Adrenal gland (tissue), 19 donors: ENCODE measurements at regions of chr1 and their contacts with region 1.

Region 1: DNA sequence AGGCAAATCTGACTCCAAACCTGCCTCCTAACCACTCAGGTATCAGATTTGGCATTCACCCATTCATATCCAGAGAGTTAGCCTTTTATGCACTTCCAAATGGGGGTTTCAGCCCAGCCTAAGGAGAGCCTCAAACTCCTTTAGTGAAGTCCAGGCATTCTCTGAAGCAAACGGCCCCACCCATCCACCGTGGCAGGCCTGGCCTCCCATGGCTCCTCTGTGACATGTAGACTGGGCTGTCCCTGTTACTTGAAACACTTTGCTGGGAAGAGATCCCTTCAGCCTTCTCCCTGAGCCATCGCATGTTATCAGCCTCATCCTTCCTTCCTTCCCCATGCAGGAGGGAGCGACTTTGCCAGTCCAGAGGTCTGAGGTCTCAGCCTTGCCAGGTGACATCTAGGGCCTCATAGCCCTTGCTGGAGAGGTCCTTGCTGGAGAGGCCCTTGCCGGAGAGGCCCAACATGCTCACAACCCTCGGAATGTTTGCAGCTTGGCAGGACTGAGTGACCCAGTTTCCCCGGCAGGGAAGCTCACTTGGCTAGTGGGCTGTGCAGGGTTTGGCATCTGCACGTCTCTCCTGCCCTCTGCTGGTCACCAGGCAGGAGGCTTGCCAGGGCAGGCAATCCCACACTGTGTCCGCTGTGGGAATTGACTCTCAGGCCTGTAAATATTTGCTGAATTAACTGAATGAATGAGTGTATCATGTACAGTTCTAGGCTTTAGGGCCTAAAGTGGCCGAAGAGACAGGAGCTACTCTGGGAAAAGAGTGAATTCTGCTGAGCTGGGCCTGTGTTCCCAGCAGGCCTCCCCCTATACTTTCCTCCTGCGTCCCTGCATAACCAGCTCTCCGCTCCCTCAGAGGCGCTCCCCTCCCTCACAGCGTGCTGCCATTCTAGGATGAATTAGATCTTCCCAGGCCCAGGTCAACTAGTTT is 26.7 kb upstream of the RBM15 start:
- DNase-seq: peak; percentile 84 to 93 (median 89)
- H3K4me3 ChIP-seq: no peak overlapping the region
- H3K27ac ChIP-seq: no peak overlapping the region
- H3K4me1 ChIP-seq: peaks cover 0 to 28% of the 10 kb centered on the region in 2 donors
- H3K27me3 ChIP-seq: no peaks in the 10 kb centered on the region
- CTCF ChIP-seq: peak; percentile 79 to 99 (median 98)
- POLR2A ChIP-seq: no peak

Region 2: DNA sequence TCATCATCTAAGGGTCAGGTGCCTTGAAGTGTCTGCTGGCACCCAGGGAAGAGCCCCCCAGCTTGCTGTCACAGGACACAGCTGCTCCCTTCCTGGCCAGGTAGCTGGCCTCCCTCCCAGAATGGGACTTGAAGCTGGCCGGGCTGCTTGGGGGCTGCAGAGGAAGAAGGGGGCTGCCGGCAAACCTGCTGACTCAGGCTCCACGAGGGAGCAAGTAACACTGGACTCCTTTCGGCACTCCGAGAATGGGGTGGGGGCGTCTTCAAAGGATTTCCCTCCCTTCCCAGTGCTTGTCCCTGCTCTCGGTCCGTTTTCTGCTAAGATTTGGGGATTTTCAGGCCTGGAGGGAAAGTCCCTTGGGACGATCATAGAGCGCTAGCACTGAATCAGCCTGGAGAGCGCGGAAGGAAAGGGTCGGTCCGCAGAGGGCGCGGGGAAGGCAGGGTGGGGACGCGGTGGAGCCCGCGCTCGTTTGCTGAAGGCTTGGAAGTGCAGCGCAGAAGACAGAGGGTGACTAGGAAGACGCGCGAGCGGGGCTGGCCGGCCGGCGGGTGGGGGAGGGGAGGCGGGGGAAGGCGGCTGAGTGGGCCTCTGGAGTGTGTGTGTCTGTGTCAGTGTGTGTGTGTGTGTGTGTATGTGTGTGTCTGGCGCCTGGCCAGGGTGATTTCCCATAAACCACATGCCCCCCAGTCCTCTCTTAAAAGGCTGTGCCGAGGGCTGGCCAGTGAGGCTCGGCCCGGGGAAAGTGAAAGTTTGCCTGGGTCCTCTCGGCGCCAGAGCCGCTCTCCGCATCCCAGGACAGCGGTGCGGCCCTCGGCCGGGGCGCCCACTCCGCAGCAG is 402.1 kb before region 1 on chr1 and contains the start of gene CSF1:
- intact Hi-C with region 1: no loop called
- DNase-seq: peak; percentile 86 to 95 (median 93)
- H3K4me3 ChIP-seq: peak within 1 kb of the TSS; percentile 31 to 84 (median 62)
- H3K27ac ChIP-seq: peak within 1 kb of the TSS in 4 of 5 donors; percentile 49 to 83 (median 80)
- H3K4me1 ChIP-seq: peaks cover 32 to 48% of the 10 kb centered on the region in 2 donors
- H3K27me3 ChIP-seq: no peaks in the 10 kb centered on the region
- CTCF ChIP-seq: no peak
- POLR2A ChIP-seq: peak; percentile 85 to 87
- total RNA-seq, gene CSF1: 3.8 to 295 (median 101) TPM

Region 3: DNA sequence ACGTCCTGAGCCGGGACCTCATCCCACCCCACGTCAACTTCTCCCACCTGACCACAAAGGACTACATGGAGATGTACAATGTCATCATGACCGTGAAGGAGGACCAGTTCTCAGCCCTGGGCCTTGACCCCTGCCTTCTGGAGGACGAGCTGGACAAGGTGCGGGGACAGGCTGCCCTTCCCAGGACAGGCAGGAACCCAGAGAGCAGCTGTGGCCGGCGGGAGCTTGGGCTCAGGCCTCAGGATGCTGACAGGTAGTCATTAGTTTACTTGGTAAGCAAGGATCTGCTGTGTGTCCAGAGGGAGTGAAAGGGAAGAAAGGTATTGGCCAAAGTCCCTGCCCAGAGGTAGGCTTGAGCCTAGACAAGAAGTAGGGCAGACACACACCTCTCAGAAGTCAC is 119.9 kb before region 1 on chr1:
- intact Hi-C with region 1: no loop called
- DNase-seq: no peak
- H3K4me3 ChIP-seq: no peak overlapping the region
- H3K27ac ChIP-seq: no peak overlapping the region
- H3K4me1 ChIP-seq: peaks cover 0 to 15% of the 10 kb centered on the region in 2 donors
- H3K27me3 ChIP-seq: no peaks in the 10 kb centered on the region
- CTCF ChIP-seq: no peak
- POLR2A ChIP-seq: no peak

Region 4: GRCh38 chr1:110203021-110203661 is 109.3 kb before region 1 on chr1:
- intact Hi-C with region 1: loop called (anchors 2 kb)
- DNase-seq: peak; percentile 56 to 84 (median 70)
- H3K4me3 ChIP-seq: no peak overlapping the region
- H3K27ac ChIP-seq: peak overlapping the region in 2 of 5 donors; percentile 24 to 38
- H3K4me1 ChIP-seq: peaks cover 0 to 5% of the 10 kb centered on the region in 2 donors
- H3K27me3 ChIP-seq: no peaks in the 10 kb centered on the region
- CTCF ChIP-seq: peak; percentile 86 to 92 (median 87)
- POLR2A ChIP-seq: no peak

Region 5: DNA sequence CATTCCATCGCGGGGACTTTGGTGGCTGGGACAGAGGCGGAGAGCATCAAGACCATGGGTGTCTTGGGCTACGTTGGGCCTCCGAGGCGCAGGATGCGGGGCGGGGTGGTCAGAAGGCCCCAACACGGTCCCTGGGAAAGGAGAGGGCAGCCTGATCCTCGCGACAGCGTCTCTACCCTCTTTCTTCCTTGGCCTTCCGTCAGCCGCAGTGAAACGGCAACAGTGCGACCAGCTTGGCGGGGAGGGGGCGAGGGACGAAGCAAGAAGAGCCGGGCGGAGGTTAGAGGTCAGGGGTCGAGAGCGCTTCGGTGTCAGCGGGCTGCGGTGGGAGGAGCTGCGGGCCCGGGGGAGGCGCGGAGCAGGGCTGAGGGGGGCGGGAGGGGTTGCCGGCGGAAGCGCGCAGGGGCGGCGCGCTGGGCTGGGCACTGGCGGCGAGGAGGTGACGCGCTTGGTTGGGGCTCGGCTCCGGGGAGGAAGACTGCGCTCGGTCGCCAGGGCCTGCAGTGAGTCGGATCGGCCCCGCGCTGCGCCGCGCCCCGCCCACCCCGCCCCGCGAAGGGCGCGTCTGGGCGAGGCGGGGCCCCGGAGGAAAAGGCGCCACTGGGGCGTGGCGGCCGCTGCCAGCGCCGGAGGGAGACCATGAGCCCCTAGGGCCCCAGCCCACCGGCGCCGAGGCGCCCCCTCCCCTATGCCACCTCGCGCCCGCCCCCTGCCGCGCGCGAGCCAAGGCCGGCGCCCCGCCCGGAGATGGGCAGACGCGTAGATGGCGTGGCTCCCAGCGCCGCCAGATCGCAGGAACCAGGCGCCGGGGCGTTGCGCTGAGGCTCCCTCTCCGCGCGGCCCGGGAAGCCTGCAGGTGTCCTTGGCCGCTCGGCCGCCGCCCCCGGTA is 102.5 kb before region 1 on chr1 and contains the start of gene KCNC4:
- intact Hi-C with region 1: loop called in 1 of 2 experiments (anchors 2 kb)
- DNase-seq: peak; percentile 90 to 95 (median 91)
- H3K4me3 ChIP-seq: peak within 1 kb of the TSS in 3 of 4 donors; percentile 44 to 89 (median 51)
- H3K27ac ChIP-seq: peak within 1 kb of the TSS; percentile 58 to 94 (median 79)
- H3K4me1 ChIP-seq: peaks cover 13 to 40% of the 10 kb centered on the region in 2 donors
- H3K27me3 ChIP-seq: no peaks in the 10 kb centered on the region
- CTCF ChIP-seq: no peak
- POLR2A ChIP-seq: peak in 1 of 2 donors; percentile 47
- total RNA-seq, gene KCNC4: 1.1 to 14.4 (median 9.7) TPM

Region 6: DNA sequence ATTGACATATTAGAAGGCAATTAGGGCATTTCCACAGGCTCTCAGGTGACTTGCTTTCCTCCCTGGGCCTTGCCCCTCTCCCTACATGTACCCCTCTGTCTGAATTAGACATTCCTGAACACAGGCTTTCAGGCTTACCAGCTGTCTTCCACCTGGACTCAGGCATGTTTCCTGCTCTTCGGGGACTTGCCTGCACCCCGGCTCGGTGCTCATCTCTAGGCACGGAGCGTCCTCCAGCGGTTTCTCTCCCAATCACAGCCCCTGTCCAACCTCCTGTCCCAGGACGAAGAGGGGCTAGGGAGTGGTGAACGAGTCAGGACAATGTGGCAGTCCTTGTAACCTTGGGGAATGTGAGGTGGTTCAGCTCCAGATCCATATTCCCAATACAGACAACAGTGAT is 142.7 kb after region 1 on chr1:
- intact Hi-C with region 1: loop called (anchors 10 kb)
- DNase-seq: no peak
- H3K4me3 ChIP-seq: no peak overlapping the region
- H3K27ac ChIP-seq: no peak overlapping the region
- H3K4me1 ChIP-seq: no peaks in the 10 kb centered on the region
- H3K27me3 ChIP-seq: no peaks in the 10 kb centered on the region
- CTCF ChIP-seq: no peak
- POLR2A ChIP-seq: no peak

Region 7: DNA sequence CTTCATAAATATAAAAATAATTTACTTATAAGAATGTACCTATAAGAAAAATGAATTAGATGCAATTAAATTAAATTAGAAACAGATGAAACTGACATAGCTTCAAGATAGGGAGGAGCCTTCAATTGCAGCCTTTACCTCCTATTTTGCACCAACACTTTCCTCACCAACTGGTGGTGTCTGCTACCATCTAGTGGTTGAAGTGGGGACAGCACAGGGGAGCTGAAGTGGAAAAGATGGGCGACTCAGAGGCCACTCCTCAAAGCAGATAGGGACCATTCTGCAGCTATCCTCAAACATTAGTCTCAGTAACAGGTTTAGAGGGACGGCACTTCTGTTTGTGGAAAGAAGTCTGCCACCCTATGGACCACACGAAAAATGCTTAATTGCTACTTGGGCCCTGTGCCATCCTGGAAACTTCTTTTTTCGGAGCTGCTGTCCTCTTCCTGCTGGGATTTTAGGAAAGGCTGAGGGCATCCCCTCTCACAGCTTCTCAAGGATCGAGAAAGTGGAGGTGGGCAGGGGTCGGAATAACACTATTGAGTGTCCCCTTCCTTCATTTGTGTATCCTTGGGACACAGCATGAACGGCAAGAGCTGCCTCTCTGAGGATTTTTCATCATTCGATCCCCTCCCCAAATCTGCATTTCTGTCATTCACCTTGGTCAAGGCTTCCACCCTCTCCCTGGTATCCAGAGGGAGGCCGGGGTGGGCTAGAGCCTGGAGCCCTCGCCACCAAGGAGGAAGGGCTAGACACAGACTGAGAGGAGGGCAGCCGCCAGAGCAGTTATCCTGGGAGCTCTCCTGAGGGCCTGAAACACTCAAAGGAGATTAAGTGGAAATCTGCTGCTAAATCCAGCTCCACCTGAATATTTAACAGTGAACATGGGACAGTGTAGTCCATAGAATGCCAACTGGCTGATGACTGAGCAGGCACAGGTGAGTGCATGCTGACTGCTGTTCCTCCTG is 148.1 kb after region 1 on chr1:
- intact Hi-C with region 1: loop called (anchors 10 kb)
- DNase-seq: peak; percentile 66 to 94 (median 85)
- H3K4me3 ChIP-seq: no peak overlapping the region
- H3K27ac ChIP-seq: no peak overlapping the region
- H3K4me1 ChIP-seq: no peaks in the 10 kb centered on the region
- H3K27me3 ChIP-seq: no peaks in the 10 kb centered on the region
- CTCF ChIP-seq: peak; percentile 92 to 99 (median 98)
- POLR2A ChIP-seq: no peak